GM10248 (cell line): ENCODE measurements at regions of chr3 and their contacts with region 1.

Region 1: GRCh38 chr3:61371123-61371522 is 119.9 kb upstream of the FHIT start:
- DNase-seq: peak; percentile 32
- CTCF ChIP-seq: peak; percentile 63

Region 2: DNA sequence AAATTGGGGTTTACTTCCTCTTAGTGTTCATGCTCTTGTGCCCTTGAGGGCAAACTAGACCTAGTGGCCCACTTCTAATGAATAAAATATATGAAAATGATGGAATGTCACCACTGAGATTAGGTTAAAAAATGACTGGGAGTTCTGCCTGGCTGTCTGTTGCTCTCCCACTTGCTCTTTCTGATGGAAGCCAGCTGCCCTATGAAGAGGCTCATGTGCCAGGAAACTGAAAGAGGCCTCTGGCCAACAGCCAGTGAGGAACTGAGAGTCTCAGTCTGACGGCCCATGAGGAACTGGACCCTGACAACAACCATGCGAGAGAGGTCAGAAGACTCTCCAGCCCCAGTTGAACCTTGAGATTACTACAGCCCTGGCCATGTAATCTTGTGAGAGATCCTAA is 12.8 kb before region 1 on chr3:
- CTCF ChIA-PET with region 1: interaction called, 14 read pairs
- POLR2A ChIA-PET with region 1: no interaction called
- DNase-seq: peak; percentile 56
- CTCF ChIP-seq: no peak

Region 3: GRCh38 chr3:61381745-61382392 is 10.7 kb after region 1 on chr3:
- CTCF ChIA-PET with region 1: interaction called, 30 read pairs
- POLR2A ChIA-PET with region 1: no interaction called
- DNase-seq: peak; percentile 52
- CTCF ChIP-seq: peak; percentile 68